ENCODE measurements at regions of chr7 and their contacts with region 1.

Region 1: GRCh38 chr7:6447581-6448199 is at the start of gene DAGLB:
- DNase-seq: peak; percentile 90
- ATAC-seq: peak; percentile 81
- H3K4me3 ChIP-seq: peak within 1 kb of the TSS; percentile 81 to 84
- H3K27ac ChIP-seq: peak within 1 kb of the TSS; percentile 89
- H3K4me1 ChIP-seq: peaks cover 18% of the 10 kb centered on the region
- H3K27me3 ChIP-seq: no peaks in the 10 kb centered on the region
- CTCF ChIP-seq: no peak
- total RNA-seq, gene DAGLB: 22.3 TPM

Region 2: GRCh38 chr7:6197801-6198551 is 249.7 kb before region 1 on chr7:
- CTCF ChIA-PET with region 1: no interaction called
- POLR2A ChIA-PET with region 1: interaction called, 13 read pairs
- in situ Hi-C with region 1: no loop called
- intact Hi-C with region 1: no loop called
- DNase-seq: no peak
- ATAC-seq: no peak
- H3K4me3 ChIP-seq: no peak overlapping the region
- H3K27ac ChIP-seq: no peak overlapping the region
- H3K4me1 ChIP-seq: no peaks in the 10 kb centered on the region; the same call in 1 of the 2 replicates
- H3K27me3 ChIP-seq: no peaks in the 10 kb centered on the region
- CTCF ChIP-seq: no peak

Region 3: DNA sequence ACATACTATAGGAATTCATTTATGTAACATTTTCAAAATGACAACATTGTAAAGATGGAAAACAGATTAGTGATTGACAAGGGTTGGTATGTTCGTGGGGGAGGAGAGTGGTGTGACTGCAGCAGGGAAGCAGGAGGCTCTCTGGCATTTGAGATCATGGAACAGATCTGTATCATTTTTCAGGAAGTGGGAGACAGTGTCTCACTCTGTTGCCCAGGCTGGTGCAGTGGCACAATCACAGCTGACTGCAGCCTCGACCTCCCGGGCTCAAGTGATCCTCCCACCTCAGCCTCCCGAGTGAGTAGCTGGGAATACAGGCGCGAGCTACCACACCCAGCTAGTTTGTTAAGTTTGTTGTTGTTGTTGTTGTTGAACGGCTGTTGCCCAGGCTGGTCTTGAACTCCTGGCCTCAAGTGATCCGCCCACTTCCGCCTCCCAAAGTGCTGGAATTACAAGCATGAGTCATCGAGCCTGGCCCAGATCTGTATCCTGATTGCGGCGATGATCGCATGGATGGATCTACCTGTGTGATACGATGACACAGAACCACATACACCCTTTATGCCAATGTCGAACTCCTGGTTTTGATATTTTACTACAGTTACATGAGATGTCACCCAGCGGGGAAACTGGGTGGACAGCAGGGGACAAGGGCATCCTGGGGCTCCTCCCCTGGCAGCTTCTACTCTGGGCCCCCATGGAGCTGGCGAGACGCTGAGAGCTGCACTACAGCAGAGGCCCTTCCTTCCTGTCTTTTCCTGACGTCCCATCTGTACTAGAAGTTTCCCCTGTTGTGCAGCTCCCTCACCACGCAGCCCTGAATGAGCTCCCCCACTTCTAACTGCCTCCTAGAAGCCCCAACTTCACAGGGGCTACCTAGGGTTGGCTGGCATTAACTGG is 163.0 kb before region 1 on chr7:
- CTCF ChIA-PET with region 1: interaction called, 10 read pairs
- POLR2A ChIA-PET with region 1: no interaction called
- in situ Hi-C with region 1: no loop called
- intact Hi-C with region 1: no loop called
- DNase-seq: no peak
- ATAC-seq: peak; percentile 70
- H3K4me3 ChIP-seq: no peak overlapping the region
- H3K27ac ChIP-seq: peak overlapping the region; percentile 17
- H3K4me1 ChIP-seq: peaks cover 10% of the 10 kb centered on the region
- H3K27me3 ChIP-seq: no peaks in the 10 kb centered on the region
- CTCF ChIP-seq: no peak

Region 4: GRCh38 chr7:6350433-6351058 is 97.1 kb before region 1 on chr7:
- CTCF ChIA-PET with region 1: no interaction called
- POLR2A ChIA-PET with region 1: interaction called, 19 read pairs
- in situ Hi-C with region 1: no loop called
- intact Hi-C with region 1: no loop called
- DNase-seq: no peak
- ATAC-seq: no peak
- H3K4me3 ChIP-seq: no peak overlapping the region
- H3K27ac ChIP-seq: no peak overlapping the region
- H3K4me1 ChIP-seq: 0 out of 2 replicates have a peak, but pooled peaks cover 3% of the 10 kb centered on the region
- H3K27me3 ChIP-seq: no peaks in the 10 kb centered on the region
- CTCF ChIP-seq: no peak

Measured in Panc1 (cell line).